Prostate gland (tissue), 2 donors: ENCODE measurements at regions of chr2 and their contacts with region 1.

Region 1: DNA sequence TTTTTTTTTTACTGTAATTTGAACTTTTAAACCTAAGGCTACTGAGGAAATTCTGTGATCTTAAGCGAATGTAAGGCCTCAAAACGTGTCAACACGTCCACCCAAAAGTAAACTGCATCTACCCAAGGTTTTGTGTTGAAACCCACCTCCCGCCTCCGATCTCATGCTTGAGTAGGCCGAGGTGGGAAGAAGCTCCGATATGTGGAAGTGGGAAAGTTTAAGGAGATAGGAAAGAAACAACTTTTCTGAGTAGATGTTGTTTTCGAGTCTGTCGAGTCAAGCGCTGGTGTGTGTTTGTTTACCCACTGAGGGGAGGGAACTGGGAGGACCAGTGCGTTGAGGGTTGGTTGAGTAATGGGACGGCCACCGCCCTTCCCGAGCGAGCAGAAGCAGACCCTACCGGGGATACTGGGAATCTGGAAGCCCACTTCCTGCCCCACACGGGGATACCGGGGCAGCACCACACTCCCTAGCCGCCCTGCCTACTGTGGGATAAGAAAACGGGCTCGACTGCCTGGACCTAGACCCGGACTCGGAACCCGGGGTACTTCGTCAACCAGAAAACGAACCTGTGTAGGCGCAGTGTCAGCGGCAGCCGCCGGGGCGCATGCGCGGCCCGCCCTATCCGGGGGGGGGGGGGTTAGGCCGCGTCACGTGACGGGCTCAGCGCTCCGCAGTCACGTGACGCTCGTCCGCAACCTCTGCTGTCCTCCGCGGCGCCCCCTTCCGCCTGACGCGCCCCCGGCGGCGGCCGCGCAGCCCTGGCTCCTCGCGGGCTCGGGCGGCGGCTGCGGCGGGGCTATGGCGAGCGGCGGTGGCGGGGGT is at the start of gene RETREG2:
- DNase-seq: peak; percentile 93
- H3K4me3 ChIP-seq: peak within 1 kb of the TSS; percentile 73 to 82
- H3K27ac ChIP-seq: peak within 1 kb of the TSS; percentile 98 to 99
- H3K4me1 ChIP-seq: peaks cover 11% of the 10 kb centered on the region
- H3K27me3 ChIP-seq: no peaks in the 10 kb centered on the region
- CTCF ChIP-seq: peak; percentile 54 to 70 (median 66)
- POLR2A ChIP-seq: peak; percentile 96
- total RNA-seq, gene RETREG2: 84.4 to 142 TPM

Region 2: DNA sequence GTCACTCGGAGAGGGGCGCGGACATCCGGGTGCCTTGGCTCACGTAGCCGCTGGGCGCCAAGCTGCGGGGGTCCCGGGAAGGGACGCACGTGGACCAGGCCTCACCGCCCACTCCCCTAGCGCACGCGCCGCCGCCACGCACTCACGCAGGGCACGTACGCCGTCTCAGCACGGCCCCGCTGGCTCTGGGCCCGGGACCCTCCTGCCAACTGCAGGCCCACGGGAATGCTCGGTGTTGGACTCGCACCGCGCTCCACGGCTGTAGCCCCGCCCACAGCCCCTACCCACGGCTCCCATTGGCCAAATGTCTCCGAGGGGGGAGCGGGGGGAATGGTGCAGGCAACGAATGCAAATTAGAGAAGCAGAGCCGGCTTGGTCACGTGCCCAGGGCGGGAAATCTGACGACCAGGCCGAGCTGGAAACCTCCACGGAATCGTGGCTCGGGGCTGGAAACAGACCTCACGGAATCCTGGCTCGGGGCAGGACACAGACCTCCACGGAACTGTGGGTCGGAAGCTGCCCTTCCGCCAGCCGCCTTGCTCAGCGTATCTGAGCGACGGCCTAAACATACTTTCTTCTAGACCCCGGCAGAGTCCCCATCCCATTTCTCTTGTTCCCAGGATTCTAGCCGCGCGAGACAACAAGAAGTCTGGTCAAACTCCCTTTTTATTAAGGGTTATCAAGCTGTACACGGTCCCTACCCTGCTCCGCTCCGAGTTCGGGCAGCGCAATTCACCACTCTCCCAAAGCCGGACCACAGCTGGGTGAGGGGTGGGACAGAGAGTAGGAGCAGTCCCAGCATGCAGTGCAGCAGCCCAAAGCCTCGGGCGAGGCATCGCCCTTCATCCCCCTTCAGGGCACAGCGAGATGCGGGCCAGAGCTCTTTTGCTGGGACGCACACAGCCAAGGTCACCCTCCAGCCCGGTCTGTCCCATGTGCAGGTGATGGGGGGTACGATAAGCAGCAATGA is 41.3 kb after region 1 on chr2 and contains the start of gene ABCB6:
- intact Hi-C with region 1: loop called (anchors 5 kb)
- DNase-seq: peak; percentile 96
- H3K4me3 ChIP-seq: peak within 1 kb of the TSS; percentile 42 to 46
- H3K27ac ChIP-seq: peak within 1 kb of the TSS; percentile 88 to 89
- H3K4me1 ChIP-seq: peaks cover 22% of the 10 kb centered on the region
- H3K27me3 ChIP-seq: no peaks in the 10 kb centered on the region
- CTCF ChIP-seq: no peak
- POLR2A ChIP-seq: peak; percentile 92
- total RNA-seq, gene ABCB6: 31.9 to 32.1 TPM

Region 3: DNA sequence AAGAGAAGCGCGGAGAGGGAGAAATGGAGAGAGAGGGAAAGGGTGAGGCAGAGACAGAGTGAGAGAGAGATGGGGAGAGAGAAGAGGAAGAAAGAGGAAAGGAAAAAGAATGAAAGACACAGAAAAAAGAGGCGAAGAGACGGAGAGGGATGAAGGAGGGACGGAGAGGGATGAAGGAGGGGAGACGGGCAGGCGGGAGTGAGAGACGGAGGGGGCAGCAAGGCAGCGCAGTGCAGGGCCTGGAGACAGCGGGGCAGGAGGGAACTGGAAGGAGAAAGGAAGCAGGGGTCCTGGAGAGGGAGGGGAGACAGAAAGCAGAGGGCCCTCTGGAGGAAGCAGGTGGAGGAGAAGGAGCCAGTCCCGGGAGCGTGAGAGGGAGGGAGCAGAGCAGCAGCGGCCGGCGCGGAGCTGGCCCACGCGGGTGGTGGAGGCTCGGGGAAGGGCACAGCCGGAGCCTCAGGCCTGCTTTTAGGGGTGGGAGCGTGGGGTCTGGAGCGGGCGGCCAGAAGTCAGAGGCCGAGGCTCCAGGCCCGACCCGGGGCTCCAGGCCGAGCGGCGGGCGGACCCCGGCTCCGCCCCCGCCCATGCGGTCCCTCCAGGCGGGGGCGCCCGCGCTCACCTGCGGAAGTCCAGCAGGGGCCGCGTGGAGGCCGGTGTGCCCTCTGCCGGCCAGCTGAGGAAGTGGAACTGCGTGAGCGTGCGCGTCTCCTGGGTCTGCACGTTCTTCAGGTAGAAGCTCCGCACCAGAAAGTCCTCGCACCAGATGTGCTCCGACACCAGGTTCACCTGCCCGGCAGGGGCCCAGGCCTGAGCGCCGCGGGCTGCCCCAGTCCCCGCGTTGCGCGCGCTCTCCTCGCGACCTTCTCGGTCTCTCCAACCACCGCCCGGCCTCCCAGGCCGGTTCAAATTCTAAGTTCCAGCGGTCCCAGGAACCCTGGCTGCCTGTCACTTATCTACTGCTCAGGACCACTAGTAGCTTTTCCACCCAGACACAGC is 116.9 kb after region 1 on chr2:
- intact Hi-C with region 1: no loop called
- DNase-seq: peak; percentile 86
- H3K4me3 ChIP-seq: peak overlapping the region; percentile 39 to 48
- H3K27ac ChIP-seq: peak overlapping the region; percentile 76 to 81
- H3K4me1 ChIP-seq: no peaks in the 10 kb centered on the region
- H3K27me3 ChIP-seq: no peaks in the 10 kb centered on the region
- CTCF ChIP-seq: peak; percentile 99 to 100 (median 100)
- POLR2A ChIP-seq: peak; percentile 26

Region 4: DNA sequence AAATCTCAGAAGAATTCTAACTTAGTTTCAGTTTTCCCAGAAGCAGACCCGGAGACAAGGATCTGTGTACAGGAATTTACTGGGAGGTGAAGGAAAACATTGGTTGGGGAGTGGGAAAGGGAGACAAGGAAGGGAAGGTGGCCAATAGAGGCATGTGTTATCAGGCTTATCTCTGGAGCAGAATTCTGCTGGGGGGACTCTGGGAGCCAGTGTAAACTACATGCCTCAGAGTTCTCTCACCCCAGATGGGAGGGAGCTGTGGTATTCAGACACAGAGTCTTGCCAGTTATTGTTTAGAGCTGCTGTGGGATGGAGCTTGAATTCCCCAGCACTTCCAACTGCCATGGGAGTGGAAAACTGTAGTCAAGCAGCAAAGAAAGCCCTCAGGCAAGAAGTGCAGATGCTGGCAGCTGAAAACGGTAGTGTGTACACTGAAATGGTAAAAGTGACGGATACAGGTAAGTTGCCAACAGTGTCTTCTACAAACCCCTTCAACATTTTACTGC is 191.0 kb after region 1 on chr2:
- intact Hi-C with region 1: no loop called
- DNase-seq: peak; percentile 37
- H3K4me3 ChIP-seq: no peak overlapping the region
- H3K27ac ChIP-seq: peak overlapping the region; percentile 8 to 55
- H3K4me1 ChIP-seq: no peaks in the 10 kb centered on the region
- H3K27me3 ChIP-seq: no peaks in the 10 kb centered on the region
- CTCF ChIP-seq: no peak
- POLR2A ChIP-seq: no peak

Region 5: DNA sequence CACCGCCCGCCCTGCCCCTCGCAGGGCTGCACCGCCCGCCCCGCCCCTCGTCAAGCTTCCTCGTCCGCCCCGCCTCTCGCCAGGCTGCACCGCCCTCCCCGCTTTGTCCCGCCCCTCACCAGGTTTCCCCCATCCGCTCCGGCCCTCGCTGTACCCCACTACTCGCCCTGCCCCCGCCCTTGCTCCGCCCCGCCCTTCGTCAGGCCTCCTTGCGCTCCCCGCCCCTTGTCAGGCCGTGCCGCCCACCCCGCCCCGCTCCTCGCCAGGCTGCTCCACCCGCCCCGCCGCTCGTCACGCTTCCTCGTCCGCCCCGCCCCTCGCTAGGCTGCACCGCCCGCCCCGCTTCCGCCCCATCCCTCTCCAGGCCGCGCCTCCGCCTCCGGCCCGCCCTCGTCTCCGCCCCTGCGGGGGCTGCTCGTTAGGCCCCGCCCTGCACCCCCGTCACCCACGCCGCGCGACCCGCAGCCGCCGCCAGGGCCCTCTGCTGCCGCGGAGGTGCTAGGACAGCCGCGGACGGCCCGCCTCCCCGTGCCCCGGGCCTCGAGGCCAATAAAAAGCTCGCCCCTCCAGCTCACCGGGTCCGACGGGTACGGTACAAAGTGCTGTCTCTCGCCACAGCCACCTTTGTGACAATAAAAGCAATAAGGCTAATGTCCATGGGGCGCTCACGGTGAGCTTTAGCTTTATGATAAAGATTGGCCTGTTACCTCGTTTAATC is 210.5 kb after region 1 on chr2:
- intact Hi-C with region 1: loop called (anchors 5 kb)
- DNase-seq: peak; percentile 96
- H3K4me3 ChIP-seq: peak overlapping the region; percentile 79 to 89
- H3K27ac ChIP-seq: peak overlapping the region; percentile 91 to 94
- H3K4me1 ChIP-seq: no peaks in the 10 kb centered on the region
- H3K27me3 ChIP-seq: no peaks in the 10 kb centered on the region
- CTCF ChIP-seq: peak; percentile 36 to 91 (median 61)
- POLR2A ChIP-seq: peak; percentile 44

Region 6: GRCh38 chr2:219509780-219510511 is 332.2 kb after region 1 on chr2:
- intact Hi-C with region 1: loop called (anchors 10 kb)
- DNase-seq: peak; percentile 33
- H3K4me3 ChIP-seq: no peak overlapping the region
- H3K27ac ChIP-seq: no peak overlapping the region
- H3K4me1 ChIP-seq: peaks cover 2% of the 10 kb centered on the region
- H3K27me3 ChIP-seq: peaks cover 9% of the 10 kb centered on the region
- CTCF ChIP-seq: peak; percentile 18 to 57 (median 39)
- POLR2A ChIP-seq: no peak

Region 7: GRCh38 chr2:220521551-220521950 is 1343.8 kb after region 1 on chr2:
- intact Hi-C with region 1: no loop called
- DNase-seq: no peak
- H3K4me3 ChIP-seq: no peak overlapping the region
- H3K27ac ChIP-seq: no peak overlapping the region
- H3K4me1 ChIP-seq: no peaks in the 10 kb centered on the region
- H3K27me3 ChIP-seq: no peaks in the 10 kb centered on the region
- CTCF ChIP-seq: no peak
- POLR2A ChIP-seq: no peak